ENCODE measurements at regions of chr5 and their contacts with region 1.

Region 1: DNA sequence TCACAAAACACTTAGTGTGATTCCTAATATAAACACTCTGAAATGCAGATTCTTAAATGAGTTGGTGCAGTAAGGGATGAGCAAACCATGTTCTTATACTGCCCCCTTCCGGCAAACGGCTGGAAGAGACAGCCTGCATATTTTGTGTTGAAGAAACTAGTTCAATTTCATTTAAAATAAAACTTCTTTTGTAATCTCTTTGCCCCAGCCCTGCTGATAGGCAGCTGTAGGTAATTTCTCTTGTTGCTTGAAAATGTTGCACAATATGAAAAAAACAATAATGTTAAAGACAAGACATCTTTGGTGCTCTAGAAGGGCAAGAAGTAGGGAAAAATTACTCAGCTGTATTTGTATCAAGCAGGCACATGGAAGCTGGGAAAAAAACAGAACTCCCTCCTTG is 89.7 kb upstream of the CCNG1 start:
- DNase-seq: peak; percentile 42
- ATAC-seq: peak; percentile 84
- H3K4me3 ChIP-seq: no peak overlapping the region
- H3K27ac ChIP-seq: no peak overlapping the region
- H3K4me1 ChIP-seq: no peaks in the 10 kb centered on the region
- H3K27me3 ChIP-seq: no peaks in the 10 kb centered on the region
- CTCF ChIP-seq: peak; percentile 82; the same call in 1 of the 2 replicates

Region 2: DNA sequence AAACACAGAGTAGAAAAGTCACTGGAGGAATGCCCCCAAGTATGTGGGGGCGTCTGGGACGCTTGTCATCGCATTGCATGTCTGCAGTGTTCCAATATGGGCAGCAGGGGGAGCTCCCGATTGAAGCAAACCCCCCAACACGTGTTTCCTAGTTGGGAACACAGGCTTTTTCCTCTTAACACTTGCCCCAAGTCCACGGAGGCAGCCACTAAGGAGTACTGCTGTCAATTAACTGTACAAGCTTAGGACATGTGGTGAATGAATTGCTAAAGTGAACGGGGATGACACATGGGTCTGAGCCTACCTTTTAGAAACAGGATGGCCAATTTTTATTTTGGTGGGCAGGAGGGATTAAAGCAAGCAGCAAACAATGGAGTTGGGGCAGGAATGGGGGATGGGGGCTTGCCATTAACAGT is 1803.3 kb before region 1 on chr5:
- CTCF ChIA-PET with region 1: no interaction called
- POLR2A ChIA-PET with region 1: no interaction called
- in situ Hi-C with region 1: no loop called
- intact Hi-C with region 1: loop called (anchors 5 kb)
- DNase-seq: no peak
- ATAC-seq: 0 out of 2 replicates have a peak, but pooled peaks have one; percentile 45
- H3K4me3 ChIP-seq: no peak overlapping the region
- H3K27ac ChIP-seq: no peak overlapping the region
- H3K4me1 ChIP-seq: peaks cover 3% of the 10 kb centered on the region; the same call in 1 of the 2 replicates
- H3K27me3 ChIP-seq: peaks cover 19% of the 10 kb centered on the region
- CTCF ChIP-seq: peak; percentile 91

Region 3: DNA sequence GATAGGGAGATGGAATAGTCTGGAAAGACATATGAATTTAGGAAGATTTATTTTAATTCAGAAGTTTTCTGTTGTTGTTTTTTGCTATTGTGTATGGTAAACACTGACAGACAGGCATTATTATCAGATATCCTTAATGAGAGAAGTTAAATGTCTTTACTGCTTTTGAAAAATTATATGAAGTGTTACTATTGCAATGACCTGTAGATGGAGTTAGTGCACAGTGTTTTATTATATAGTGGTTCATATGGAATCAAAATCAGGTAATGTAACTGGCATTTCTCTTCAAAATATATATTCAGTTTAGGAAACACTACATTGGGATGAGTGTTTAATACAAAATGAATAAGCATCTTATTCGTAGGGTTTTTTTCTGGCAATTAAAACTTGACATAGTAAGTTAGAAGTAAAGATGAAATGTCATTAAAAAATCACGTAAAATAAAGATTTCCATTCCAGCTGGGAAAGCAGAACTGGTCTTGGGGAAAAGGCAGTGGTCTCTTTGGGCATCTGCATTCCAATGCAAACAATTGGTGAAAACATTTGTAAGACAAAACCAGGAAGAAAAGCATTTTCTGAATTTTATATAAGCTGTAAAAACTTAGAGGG is 1495.9 kb before region 1 on chr5:
- CTCF ChIA-PET with region 1: interaction called, 8 read pairs
- POLR2A ChIA-PET with region 1: no interaction called
- in situ Hi-C with region 1: no loop called
- intact Hi-C with region 1: loop called (anchors 2 kb)
- DNase-seq: no peak
- ATAC-seq: no peak
- H3K4me3 ChIP-seq: no peak overlapping the region
- H3K27ac ChIP-seq: no peak overlapping the region
- H3K4me1 ChIP-seq: no peaks in the 10 kb centered on the region
- H3K27me3 ChIP-seq: peaks cover 9% of the 10 kb centered on the region; the same call in 1 of the 2 replicates
- CTCF ChIP-seq: peak; percentile 43; the same call in 1 of the 2 replicates

Measured in Panc1 (cell line).